Naive thymus-derived CD4-positive, alpha-beta T cell (primary cell): ENCODE measurements at regions of chr7 and their contacts with region 1.

Region 1: GRCh38 chr7:129952653-129953560 is at the start of gene UBE2H:
- DNase-seq: peak; percentile 78 to 91 (median 86)
- ATAC-seq: peak; percentile 90
- H3K4me3 ChIP-seq: peak within 1 kb of the TSS; percentile 80
- H3K4me3 Mint-ChIP-seq: peak within 1 kb of the TSS in 8 of 10 donors; percentile 2 to 100 (median 98)
- H3K27ac ChIP-seq: peak within 1 kb of the TSS; percentile 99
- H3K27ac Mint-ChIP-seq: peak within 1 kb of the TSS in 6 of 9 donors; percentile 98 to 100 (median 99)
- H3K4me1 ChIP-seq: peaks cover 14 to 28% of the 10 kb centered on the region in 2 donors
- H3K4me1 Mint-ChIP-seq: peaks cover 0 to 13% (median 6%) of the 10 kb centered on the region in 7 donors
- H3K27me3 ChIP-seq: no peaks in the 10 kb centered on the region
- H3K27me3 Mint-ChIP-seq: peaks cover 0 to 9% (median 0%) of the 10 kb centered on the region in 5 donors
- total RNA-seq, gene UBE2H: 32.0 to 69.2 (median 49.1) TPM

Region 2: DNA sequence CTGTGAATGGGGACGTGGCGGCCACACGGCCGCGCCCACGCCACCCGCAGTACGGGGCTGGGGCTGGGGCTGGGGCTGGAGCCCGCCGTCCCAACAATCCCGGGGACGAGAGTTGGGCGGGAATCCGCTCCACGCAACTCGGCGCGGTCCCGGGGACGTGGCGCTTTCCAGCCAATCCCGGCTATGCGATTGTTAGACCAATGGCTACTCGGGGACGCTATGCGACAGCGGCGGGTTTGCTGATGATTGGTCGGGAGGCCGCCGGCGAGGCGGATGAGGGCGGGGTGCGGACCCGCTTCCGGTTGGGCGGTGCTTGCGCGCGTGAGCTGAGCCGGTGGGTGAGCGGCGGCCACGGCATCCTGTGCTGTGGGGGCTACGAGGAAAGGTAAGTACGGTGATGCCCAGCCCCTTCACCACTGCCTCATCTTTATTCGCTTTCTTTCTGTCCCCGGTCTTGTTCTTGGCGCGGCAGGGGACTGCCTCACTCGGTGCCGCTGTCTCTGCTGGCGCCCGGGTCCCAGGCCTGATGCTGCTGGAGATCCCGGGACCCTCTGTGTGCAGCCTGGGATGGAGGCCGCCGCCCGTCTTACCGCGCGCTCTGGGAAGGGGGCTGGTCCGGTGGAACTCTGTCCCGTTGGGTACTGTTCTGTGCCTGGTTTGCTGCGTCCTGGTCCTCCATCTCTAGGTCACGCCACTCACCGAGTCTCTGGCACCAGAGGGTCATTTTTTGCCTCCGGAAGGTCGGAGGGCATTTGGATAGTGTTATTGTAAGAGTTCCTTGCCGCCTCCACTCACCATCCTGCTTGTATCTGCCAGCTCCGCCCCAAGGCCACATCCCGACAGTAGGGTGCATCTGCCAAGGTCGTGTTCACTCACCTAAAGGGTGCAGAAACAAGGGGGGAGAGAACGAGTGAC is 1213.6 kb before region 1 on chr7 and contains the start of gene CALU:
- CTCF ChIA-PET with region 1: no interaction called
- POLR2A ChIA-PET with region 1: no interaction called
- intact Hi-C with region 1: loop called in 1 of 2 experiments (anchors 2 kb)
- DNase-seq: peak; percentile 87 to 95 (median 94)
- ATAC-seq: peak; percentile 98
- H3K4me3 ChIP-seq: peak within 1 kb of the TSS; percentile 86
- H3K4me3 Mint-ChIP-seq: peak within 1 kb of the TSS; percentile 89 to 100 (median 97)
- H3K27ac ChIP-seq: peak within 1 kb of the TSS; percentile 85
- H3K27ac Mint-ChIP-seq: peak within 1 kb of the TSS; percentile 96 to 99 (median 98)
- H3K4me1 ChIP-seq: peaks cover 13% of the 10 kb centered on the region in 2 donors
- H3K4me1 Mint-ChIP-seq: peaks cover 11 to 52% (median 45%) of the 10 kb centered on the region in 7 donors
- H3K27me3 ChIP-seq: no peaks in the 10 kb centered on the region
- H3K27me3 Mint-ChIP-seq: peaks cover 0 to 5% (median 0%) of the 10 kb centered on the region in 5 donors
- total RNA-seq, gene CALU: 18.6 to 36.2 (median 22.6) TPM

Region 3: GRCh38 chr7:129367700-129368388 is 585.1 kb before region 1 on chr7:
- CTCF ChIA-PET with region 1: no interaction called
- POLR2A ChIA-PET with region 1: no interaction called
- intact Hi-C with region 1: loop called in 1 of 2 experiments (anchors 2 kb)
- DNase-seq: peak; percentile 25 to 71 (median 60)
- ATAC-seq: peak; percentile 85
- H3K4me3 ChIP-seq: peak overlapping the region; percentile 10
- H3K4me3 Mint-ChIP-seq: peak overlapping the region in 8 of 10 donors; percentile 12 to 88 (median 34)
- H3K27ac ChIP-seq: no peak overlapping the region
- H3K27ac Mint-ChIP-seq: peak overlapping the region in 5 of 9 donors; percentile 10 to 91 (median 25)
- H3K4me1 ChIP-seq: peaks cover 8% of the 10 kb centered on the region in 2 donors
- H3K4me1 Mint-ChIP-seq: peaks cover 10 to 48% (median 16%) of the 10 kb centered on the region in 7 donors
- H3K27me3 ChIP-seq: no peaks in the 10 kb centered on the region
- H3K27me3 Mint-ChIP-seq: no peaks in the 10 kb centered on the region

Region 4: DNA sequence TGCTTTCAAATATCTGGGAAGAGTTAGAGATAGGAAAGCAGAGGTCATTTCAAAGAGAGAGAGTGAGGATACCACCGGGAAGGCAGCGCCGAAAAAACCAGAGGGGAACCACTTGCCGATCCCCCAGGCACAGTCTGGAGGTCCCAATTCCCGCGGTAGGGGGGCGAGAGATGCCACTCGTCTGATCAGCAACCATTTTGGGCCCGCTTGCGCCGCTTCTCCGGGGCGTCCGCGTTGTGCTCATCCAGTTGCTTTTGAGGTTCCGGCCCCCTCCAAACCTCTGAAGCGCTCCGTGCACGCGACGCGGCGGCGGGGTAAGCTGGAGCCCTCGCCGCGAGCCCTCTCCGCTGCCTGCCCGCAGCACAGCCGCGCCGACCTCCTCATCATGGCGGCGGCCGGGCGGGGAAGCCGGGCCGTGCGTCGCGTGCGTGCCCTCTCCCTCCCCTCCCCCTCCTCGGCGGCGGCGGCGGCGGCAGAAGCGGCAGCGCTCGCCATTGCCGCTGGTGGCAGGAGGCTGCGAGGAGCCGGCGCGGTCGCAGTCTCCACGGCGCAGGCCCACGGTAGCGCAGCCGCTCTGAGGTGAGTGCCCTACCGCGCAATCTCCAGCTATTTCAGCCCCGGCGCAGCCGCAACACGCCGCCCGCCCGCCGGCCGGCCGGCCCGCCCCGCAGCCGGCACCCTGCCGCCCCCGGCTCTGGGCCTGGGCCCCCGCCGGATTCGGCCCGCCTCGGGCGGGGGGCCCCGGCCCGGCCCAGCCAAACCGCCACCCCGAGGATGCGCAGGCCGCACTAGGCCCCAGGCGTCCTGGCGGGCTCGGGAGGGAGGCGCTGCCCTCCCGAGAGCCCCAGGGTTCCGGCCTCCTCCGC is 341.4 kb before region 1 on chr7 and contains the start of gene NRF1:
- CTCF ChIA-PET with region 1: no interaction called
- POLR2A ChIA-PET with region 1: no interaction called
- intact Hi-C with region 1: loop called (anchors 1 to 2 kb)
- DNase-seq: peak; percentile 89 to 97 (median 94)
- ATAC-seq: peak; percentile 92
- H3K4me3 ChIP-seq: peak within 1 kb of the TSS; percentile 87
- H3K4me3 Mint-ChIP-seq: peak within 1 kb of the TSS; percentile 88 to 99 (median 96)
- H3K27ac ChIP-seq: peak within 1 kb of the TSS; percentile 82
- H3K27ac Mint-ChIP-seq: peak within 1 kb of the TSS; percentile 92 to 99 (median 96)
- H3K4me1 ChIP-seq: peaks cover 24 to 38% of the 10 kb centered on the region in 2 donors
- H3K4me1 Mint-ChIP-seq: peaks cover 37 to 79% (median 67%) of the 10 kb centered on the region in 7 donors
- H3K27me3 ChIP-seq: no peaks in the 10 kb centered on the region
- H3K27me3 Mint-ChIP-seq: no peaks in the 10 kb centered on the region
- total RNA-seq, gene NRF1: 25.8 to 49.3 (median 35.3) TPM

Region 5: GRCh38 chr7:129933627-129934026 is 19.3 kb before region 1 on chr7:
- CTCF ChIA-PET with region 1: no interaction called
- POLR2A ChIA-PET with region 1: interaction called, 3 read pairs
- intact Hi-C with region 1: loop called in 1 of 2 experiments (anchors 2 kb)
- DNase-seq: no peak
- ATAC-seq: no peak
- H3K4me3 ChIP-seq: no peak overlapping the region
- H3K4me3 Mint-ChIP-seq: peak overlapping the region in 1 of 10 donors; percentile 5
- H3K27ac ChIP-seq: no peak overlapping the region
- H3K27ac Mint-ChIP-seq: peak overlapping the region in 1 of 9 donors; percentile 22
- H3K4me1 ChIP-seq: no peaks in the 10 kb centered on the region
- H3K4me1 Mint-ChIP-seq: peaks cover 0 to 34% (median 18%) of the 10 kb centered on the region in 7 donors
- H3K27me3 ChIP-seq: no peaks in the 10 kb centered on the region
- H3K27me3 Mint-ChIP-seq: no peaks in the 10 kb centered on the region

Region 6: GRCh38 chr7:130205084-130205947 is 252.4 kb after region 1 on chr7 and contains the start of gene TMEM209:
- CTCF ChIA-PET with region 1: no interaction called
- POLR2A ChIA-PET with region 1: no interaction called
- intact Hi-C with region 1: loop called in 1 of 2 experiments (anchors 2 kb)
- DNase-seq: peak; percentile 80 to 96 (median 93)
- ATAC-seq: peak; percentile 98
- H3K4me3 ChIP-seq: peak within 1 kb of the TSS; percentile 89
- H3K4me3 Mint-ChIP-seq: peak within 1 kb of the TSS; percentile 98 to 100 (median 100)
- H3K27ac ChIP-seq: peak within 1 kb of the TSS; percentile 83
- H3K27ac Mint-ChIP-seq: peak within 1 kb of the TSS; percentile 97 to 100 (median 99)
- H3K4me1 ChIP-seq: peaks cover 11 to 14% of the 10 kb centered on the region in 2 donors
- H3K4me1 Mint-ChIP-seq: peaks cover 13 to 43% (median 37%) of the 10 kb centered on the region in 7 donors
- H3K27me3 ChIP-seq: no peaks in the 10 kb centered on the region
- H3K27me3 Mint-ChIP-seq: peaks cover 0 to 9% (median 0%) of the 10 kb centered on the region in 5 donors
- total RNA-seq, gene TMEM209: 18.8 to 37.3 (median 35.1) TPM

Region 7: GRCh38 chr7:131107337-131108211 is 1154.7 kb after region 1 on chr7:
- CTCF ChIA-PET with region 1: no interaction called
- POLR2A ChIA-PET with region 1: no interaction called
- intact Hi-C with region 1: loop called in 1 of 2 experiments (anchors 5 kb)
- DNase-seq: peak; percentile 53 to 90 (median 84)
- ATAC-seq: peak; percentile 38
- H3K4me3 ChIP-seq: peak overlapping the region; percentile 98
- H3K4me3 Mint-ChIP-seq: peak overlapping the region; percentile 86 to 100 (median 97)
- H3K27ac ChIP-seq: peak overlapping the region; percentile 98
- H3K27ac Mint-ChIP-seq: peak overlapping the region; percentile 95 to 100 (median 98)
- H3K4me1 ChIP-seq: peaks cover 42 to 46% of the 10 kb centered on the region in 2 donors
- H3K4me1 Mint-ChIP-seq: peaks cover 48 to 69% (median 58%) of the 10 kb centered on the region in 7 donors
- H3K27me3 ChIP-seq: no peaks in the 10 kb centered on the region
- H3K27me3 Mint-ChIP-seq: peaks cover 0 to 5% (median 0%) of the 10 kb centered on the region in 5 donors